HEK293T (cell line): ENCODE measurements at regions of chr19 and their contacts with region 1.

Region 1: GRCh38 chr19:7522072-7522922 is at the start of gene MCOLN1:
- DNase-seq: peak; percentile 100

Region 2: GRCh38 chr19:7460562-7460966 is 61.7 kb before region 1 on chr19:
- CTCF ChIA-PET with region 1: no interaction called
- POLR2A ChIA-PET with region 1: no interaction called
- DNase-seq: no peak

Region 3: GRCh38 chr19:7471696-7472615 is 50.3 kb before region 1 on chr19:
- CTCF ChIA-PET with region 1: no interaction called
- POLR2A ChIA-PET with region 1: no interaction called
- DNase-seq: no peak

Region 4: DNA sequence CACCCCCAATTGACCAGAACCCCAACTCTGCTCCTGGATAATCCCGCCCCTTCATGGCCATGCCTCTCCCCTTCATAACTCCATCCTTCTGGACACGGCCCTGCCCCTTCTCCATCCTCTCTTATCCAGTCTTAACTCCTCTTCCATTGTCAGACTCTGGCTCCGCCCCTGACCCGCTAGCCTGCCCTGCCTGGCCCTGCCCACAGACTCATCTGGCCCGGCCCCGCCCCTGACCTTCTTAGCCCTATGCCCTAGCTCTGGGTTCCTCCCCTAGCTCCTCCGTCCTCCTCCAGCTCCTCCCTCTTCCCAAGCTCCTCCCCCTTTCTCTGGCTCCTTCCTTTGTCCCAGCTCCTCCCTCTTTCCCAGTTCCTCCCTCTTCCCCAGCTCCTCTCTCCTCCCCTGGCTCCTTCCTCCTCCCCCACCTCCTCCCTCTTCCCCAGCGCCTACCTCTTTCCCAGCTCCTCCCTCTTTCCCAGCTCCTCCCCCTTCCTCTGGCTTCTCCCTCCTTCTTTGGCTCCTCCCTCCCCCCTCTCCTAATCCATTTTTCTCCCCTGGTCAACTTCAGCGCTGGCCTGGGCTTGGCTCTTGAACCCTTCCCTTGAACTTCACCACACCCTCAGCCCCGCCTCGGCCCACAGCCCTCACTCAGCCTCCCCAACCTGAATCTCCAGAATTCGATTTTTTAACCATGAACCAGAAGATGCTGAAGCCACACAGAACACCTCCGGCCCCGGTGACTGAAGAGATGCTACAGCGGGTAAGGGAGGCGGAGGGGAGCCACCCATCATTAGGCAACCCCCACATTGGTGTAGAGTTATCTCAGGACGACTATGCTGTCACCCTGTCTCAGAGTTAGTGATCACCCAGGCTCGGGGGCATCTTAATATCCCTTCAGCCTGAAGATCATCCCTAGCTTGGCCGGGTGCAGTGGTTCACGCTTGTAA is 15.6 kb before region 1 on chr19:
- CTCF ChIA-PET with region 1: no interaction called
- POLR2A ChIA-PET with region 1: interaction called, 21 read pairs
- DNase-seq: peak; percentile 87

Region 5: GRCh38 chr19:7533281-7533885 is 11.1 kb after region 1 on chr19:
- CTCF ChIA-PET with region 1: interaction called, 3 read pairs
- POLR2A ChIA-PET with region 1: interaction called, 21 read pairs
- DNase-seq: no peak